Activated naive CD4-positive, alpha-beta T cell treated with anti-CD3 and anti-CD28 coated beads for 36 hours (primary cell): ENCODE measurements at regions of chr4 and their contacts with region 1.

Region 1: GRCh38 chr4:168076989-168077725 is 15.2 kb upstream of the ANXA10 start:
- DNase-seq: peak; percentile 76
- H3K4me3 Mint-ChIP-seq: no peak overlapping the region
- H3K27ac Mint-ChIP-seq: no peak overlapping the region
- H3K4me1 Mint-ChIP-seq: no peaks in the 10 kb centered on the region
- H3K27me3 Mint-ChIP-seq: no peaks in the 10 kb centered on the region

Region 2: GRCh38 chr4:167622481-167623246 is 454.5 kb before region 1 on chr4:
- CTCF ChIA-PET with region 1: no interaction called
- intact Hi-C with region 1: loop called (anchors 2 kb)
- DNase-seq: peak; percentile 45
- H3K4me3 Mint-ChIP-seq: no peak overlapping the region
- H3K27ac Mint-ChIP-seq: no peak overlapping the region
- H3K4me1 Mint-ChIP-seq: no peaks in the 10 kb centered on the region
- H3K27me3 Mint-ChIP-seq: no peaks in the 10 kb centered on the region

Region 3: GRCh38 chr4:167868163-167868562 is 209.0 kb before region 1 on chr4:
- CTCF ChIA-PET with region 1: no interaction called
- intact Hi-C with region 1: no loop called
- DNase-seq: no peak
- H3K4me3 Mint-ChIP-seq: no peak overlapping the region
- H3K27ac Mint-ChIP-seq: no peak overlapping the region
- H3K4me1 Mint-ChIP-seq: no peaks in the 10 kb centered on the region
- H3K27me3 Mint-ChIP-seq: no peaks in the 10 kb centered on the region

Region 4: DNA sequence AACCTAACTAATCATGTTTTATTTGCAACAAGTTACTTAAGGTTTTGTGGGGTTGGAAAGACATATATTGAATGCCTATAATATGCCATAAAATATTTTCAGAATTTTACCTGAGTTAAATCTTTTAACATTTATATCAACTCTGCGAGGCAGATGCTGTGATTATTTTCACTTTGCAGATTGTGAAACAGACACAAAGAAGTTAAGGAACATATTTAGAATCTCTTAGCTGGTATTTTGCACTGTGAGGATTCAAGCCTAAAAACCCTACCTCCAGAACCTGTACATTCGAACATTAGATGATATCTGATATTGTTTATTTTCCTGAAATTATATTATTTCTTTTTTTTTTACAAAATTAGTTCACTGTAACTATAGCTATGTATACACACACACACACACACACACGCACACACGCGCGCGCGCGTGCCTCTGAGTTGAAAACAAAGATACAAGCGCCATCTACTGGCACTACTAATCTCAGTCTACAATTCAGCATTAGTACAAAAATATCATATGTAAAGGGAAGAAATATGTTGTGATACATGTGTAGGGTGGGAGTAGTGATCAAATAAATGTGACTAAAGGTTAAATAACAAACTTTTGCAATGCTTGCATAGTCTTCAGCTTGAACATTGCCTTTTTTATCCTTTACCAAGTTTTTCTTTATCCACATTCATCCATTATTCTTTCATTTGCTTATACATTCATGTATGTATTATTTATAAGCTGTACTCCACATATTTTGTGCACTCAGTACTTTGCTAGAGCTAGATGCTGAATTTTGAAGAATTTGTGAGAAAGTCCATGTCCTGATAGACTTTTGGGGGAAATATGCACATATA is 76.7 kb after region 1 on chr4:
- CTCF ChIA-PET with region 1: interaction called, 3 read pairs
- intact Hi-C with region 1: loop called (anchors 2 kb)
- DNase-seq: peak; percentile 67
- H3K4me3 Mint-ChIP-seq: no peak overlapping the region
- H3K27ac Mint-ChIP-seq: no peak overlapping the region
- H3K4me1 Mint-ChIP-seq: peaks cover 5% of the 10 kb centered on the region
- H3K27me3 Mint-ChIP-seq: no peaks in the 10 kb centered on the region